K562 (cell line): ENCODE measurements at regions of chr16 and their contacts with region 1.

Region 1: GRCh38 chr16:71870818-71871217 is 13.2 kb downstream of the ZNF821 start:
- DNase-seq: no peak
- ATAC-seq: no peak
- H3K4me3 ChIP-seq: no peak overlapping the region
- H3K27ac ChIP-seq: no peak overlapping the region
- H3K4me1 ChIP-seq: no peaks in the 10 kb centered on the region; a peak in 1 of 5 replicates
- H3K27me3 ChIP-seq: no peaks in the 10 kb centered on the region
- CTCF ChIP-seq: no peak
- EP300 ChIP-seq: no peak
- POLR2A ChIP-seq: no peak
- RAD21 ChIP-seq: no peak

Region 2: GRCh38 chr16:71853413-71853812 is 17.4 kb before region 1 on chr16:
- CTCF ChIA-PET with region 1: no interaction called
- POLR2A ChIA-PET with region 1: interaction called, 19 read pairs
- in situ Hi-C with region 1: no loop called
- intact Hi-C with region 1: no loop called
- DNase-seq: no peak
- ATAC-seq: no peak
- H3K4me3 ChIP-seq: no peak overlapping the region
- H3K27ac ChIP-seq: no peak overlapping the region
- H3K4me1 ChIP-seq: no peaks in the 10 kb centered on the region; a peak in 1 of 5 replicates
- H3K27me3 ChIP-seq: no peaks in the 10 kb centered on the region
- CTCF ChIP-seq: no peak
- EP300 ChIP-seq: no peak
- POLR2A ChIP-seq: no peak
- RAD21 ChIP-seq: no peak